ENCODE measurements at regions of chr1 and their contacts with region 1.

Region 1: DNA sequence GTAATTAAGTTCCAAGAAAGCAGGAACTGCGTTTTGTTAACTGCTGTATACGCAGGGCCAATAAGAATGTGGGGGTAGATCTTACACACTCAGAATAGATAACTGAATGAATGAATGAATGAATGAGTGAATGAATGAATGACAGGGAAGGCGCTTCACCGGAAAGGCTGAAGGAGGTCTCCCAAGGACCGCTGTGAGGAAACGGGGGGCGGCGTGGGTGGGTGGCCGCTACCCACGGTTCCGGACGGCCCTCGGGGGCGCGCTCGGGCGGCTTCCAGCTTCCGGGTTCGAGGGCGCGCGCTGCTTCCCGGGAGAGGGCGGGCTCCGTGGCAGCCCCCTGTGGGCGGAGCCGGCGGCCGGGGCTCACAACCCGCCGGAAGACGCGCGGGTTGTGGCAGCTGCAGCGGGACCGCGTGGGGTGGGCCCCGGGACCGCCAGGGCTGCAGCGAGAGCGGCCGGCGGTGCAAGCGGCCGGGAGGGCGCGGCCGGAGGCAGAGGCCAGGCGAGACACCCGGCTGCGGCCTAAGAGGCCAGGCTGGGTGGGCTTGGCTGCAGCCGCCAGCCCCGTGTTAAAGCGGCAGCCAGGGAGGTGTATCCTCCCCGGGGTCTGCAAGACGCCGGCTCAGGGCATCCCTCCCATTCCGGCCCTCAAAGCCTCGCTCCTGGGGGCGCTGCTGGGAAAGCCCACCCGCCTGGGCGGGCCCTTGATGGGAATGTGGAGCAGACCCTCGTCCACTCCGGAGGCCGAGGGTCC is at the start of gene ZFP69:
- DNase-seq: peak; percentile 29 to 88 (median 71)
- ATAC-seq: peak; percentile 95
- H3K4me3 ChIP-seq: peak within 1 kb of the TSS; percentile 79 to 82
- H3K4me3 Mint-ChIP-seq: peak within 1 kb of the TSS; percentile 91
- H3K27ac ChIP-seq: peak within 1 kb of the TSS; percentile 58 to 65
- H3K27ac Mint-ChIP-seq: peak within 1 kb of the TSS; percentile 87
- H3K4me1 ChIP-seq: peaks cover 10% of the 10 kb centered on the region
- H3K4me1 Mint-ChIP-seq: peaks cover 24% of the 10 kb centered on the region
- H3K27me3 ChIP-seq: no peaks in the 10 kb centered on the region
- H3K27me3 Mint-ChIP-seq: no peaks in the 10 kb centered on the region
- CTCF ChIP-seq: no peak
- total RNA-seq, gene ZFP69: 0.64 to 0.92 TPM

Region 2: DNA sequence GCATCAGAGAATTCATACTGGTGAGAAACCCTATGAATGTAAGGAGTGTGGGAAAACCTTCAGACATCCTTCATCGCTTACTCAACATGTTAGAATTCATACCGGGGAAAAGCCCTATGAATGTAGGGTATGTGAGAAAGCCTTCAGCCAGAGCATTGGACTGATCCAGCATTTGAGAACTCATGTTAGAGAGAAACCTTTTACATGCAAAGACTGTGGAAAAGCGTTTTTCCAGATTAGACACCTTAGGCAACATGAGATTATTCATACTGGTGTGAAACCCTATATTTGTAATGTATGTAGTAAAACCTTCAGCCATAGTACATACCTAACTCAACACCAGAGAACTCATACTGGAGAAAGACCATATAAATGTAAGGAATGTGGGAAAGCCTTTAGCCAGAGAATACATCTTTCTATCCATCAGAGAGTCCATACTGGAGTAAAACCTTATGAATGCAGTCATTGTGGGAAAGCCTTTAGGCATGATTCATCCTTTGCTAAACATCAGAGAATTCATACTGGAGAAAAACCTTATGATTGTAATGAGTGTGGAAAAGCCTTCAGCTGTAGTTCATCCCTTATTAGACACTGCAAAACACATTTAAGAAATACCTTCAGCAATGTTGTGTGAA is 14.0 kb before region 1 on chr1:
- CTCF ChIA-PET with region 1: no interaction called
- POLR2A ChIA-PET with region 1: no interaction called
- intact Hi-C with region 1: loop called in 1 of 2 experiments (anchors 1 kb)
- DNase-seq: no peak
- ATAC-seq: no peak
- H3K4me3 ChIP-seq: no peak overlapping the region
- H3K4me3 Mint-ChIP-seq: no peak overlapping the region
- H3K27ac ChIP-seq: no peak overlapping the region
- H3K27ac Mint-ChIP-seq: no peak overlapping the region
- H3K4me1 ChIP-seq: no peaks in the 10 kb centered on the region
- H3K4me1 Mint-ChIP-seq: no peaks in the 10 kb centered on the region
- H3K27me3 ChIP-seq: no peaks in the 10 kb centered on the region
- H3K27me3 Mint-ChIP-seq: no peaks in the 10 kb centered on the region
- CTCF ChIP-seq: no peak

Region 3: DNA sequence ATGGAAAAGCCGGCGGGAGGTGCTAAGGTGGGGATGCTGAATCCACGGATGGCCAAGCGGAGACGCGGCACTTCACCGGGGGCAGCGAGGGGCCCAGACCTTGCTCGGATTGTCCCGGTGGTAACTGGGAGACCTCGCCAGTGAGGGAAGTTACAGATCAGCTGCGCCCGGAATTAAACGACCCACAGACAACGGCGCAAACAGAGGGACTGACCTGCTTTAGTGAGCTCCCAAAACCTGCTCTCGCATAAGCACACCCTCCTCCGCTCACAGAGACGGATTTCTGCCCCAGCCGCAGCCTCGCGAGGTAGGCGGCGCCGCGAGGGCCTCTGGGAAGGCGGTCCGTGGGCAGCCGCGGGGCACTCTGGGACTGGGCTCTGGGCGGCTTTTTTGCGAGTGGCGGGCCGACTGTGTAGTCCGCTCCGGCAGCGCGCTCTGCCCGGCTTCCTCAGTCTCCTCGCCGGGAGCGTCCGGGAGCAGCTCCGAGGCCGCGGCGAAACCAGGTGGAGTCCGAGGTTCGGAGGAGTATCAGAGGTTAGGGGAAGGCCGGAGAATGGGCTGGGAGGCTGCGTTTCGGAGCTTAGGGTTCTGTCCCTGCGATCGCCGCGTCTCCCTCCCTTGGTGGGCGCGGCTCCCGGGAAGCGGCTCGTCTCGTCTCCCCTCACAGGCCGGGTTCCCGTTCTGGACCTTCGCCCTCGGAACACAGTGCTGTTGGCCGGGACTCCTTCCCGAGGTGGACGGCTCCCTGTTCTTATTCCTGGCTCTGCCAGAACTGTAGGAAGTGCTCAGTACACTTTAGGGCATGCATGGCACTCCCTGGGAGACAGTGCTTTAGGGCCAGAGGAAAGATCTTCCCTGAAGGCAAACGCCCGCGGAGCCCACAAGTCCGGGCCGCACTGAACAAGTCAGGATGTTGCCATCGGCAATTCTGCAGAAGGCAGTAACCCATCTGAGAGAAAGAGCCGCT is 31.6 kb after region 1 on chr1 and contains the start of gene EXO5:
- CTCF ChIA-PET with region 1: no interaction called
- POLR2A ChIA-PET with region 1: interaction called, 4 read pairs
- intact Hi-C with region 1: loop called in 1 of 2 experiments (anchors 1 kb)
- DNase-seq: peak; percentile 60 to 89 (median 80)
- ATAC-seq: peak; percentile 98
- H3K4me3 ChIP-seq: peak within 1 kb of the TSS; percentile 79 to 95
- H3K4me3 Mint-ChIP-seq: peak within 1 kb of the TSS; percentile 90
- H3K27ac ChIP-seq: peak within 1 kb of the TSS; percentile 54 to 72
- H3K27ac Mint-ChIP-seq: peak within 1 kb of the TSS; percentile 77
- H3K4me1 ChIP-seq: peaks cover 9% of the 10 kb centered on the region
- H3K4me1 Mint-ChIP-seq: peaks cover 19% of the 10 kb centered on the region
- H3K27me3 ChIP-seq: no peaks in the 10 kb centered on the region
- H3K27me3 Mint-ChIP-seq: no peaks in the 10 kb centered on the region
- CTCF ChIP-seq: no peak
- total RNA-seq, gene EXO5: 6.7 to 7.6 TPM

Region 4: DNA sequence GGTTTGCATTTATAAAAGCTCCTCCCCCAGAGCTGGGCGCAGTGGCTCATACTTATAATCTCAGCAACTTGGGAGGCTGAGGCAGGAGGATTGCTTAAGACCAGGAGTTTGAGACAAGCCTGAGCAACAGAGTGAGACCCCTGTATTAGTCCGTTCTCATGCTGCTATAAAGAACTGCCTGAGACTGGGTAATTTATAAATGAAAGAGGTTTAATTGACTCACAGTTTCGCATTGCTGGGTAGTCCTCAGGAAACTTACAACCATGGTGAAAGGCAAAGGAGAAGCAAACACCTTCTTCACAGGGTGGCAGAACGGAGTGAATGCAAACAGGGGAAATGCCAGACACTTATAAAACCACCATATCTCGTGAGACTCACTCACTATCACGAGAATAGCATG is 106.9 kb after region 1 on chr1:
- CTCF ChIA-PET with region 1: no interaction called
- POLR2A ChIA-PET with region 1: no interaction called
- intact Hi-C with region 1: no loop called
- DNase-seq: no peak
- ATAC-seq: no peak
- H3K4me3 ChIP-seq: no peak overlapping the region
- H3K4me3 Mint-ChIP-seq: no peak overlapping the region
- H3K27ac ChIP-seq: no peak overlapping the region
- H3K27ac Mint-ChIP-seq: no peak overlapping the region
- H3K4me1 ChIP-seq: no peaks in the 10 kb centered on the region
- H3K4me1 Mint-ChIP-seq: no peaks in the 10 kb centered on the region
- H3K27me3 ChIP-seq: no peaks in the 10 kb centered on the region
- H3K27me3 Mint-ChIP-seq: peaks cover 3% of the 10 kb centered on the region
- CTCF ChIP-seq: no peak